Ascending aorta (tissue), 2 donors: ENCODE measurements at regions of chr13 and their contacts with region 1.

Region 1: GRCh38 chr13:43878892-43879754 is at the start of gene CCDC122:
- DNase-seq: peak; percentile 27 to 90
- H3K4me3 ChIP-seq: peak within 1 kb of the TSS; percentile 87 to 93
- H3K27ac ChIP-seq: peak within 1 kb of the TSS; percentile 93 to 96
- H3K4me1 ChIP-seq: peaks cover 0 to 9% of the 10 kb centered on the region in 2 donors
- H3K27me3 ChIP-seq: no peaks in the 10 kb centered on the region
- CTCF ChIP-seq: no peak
- total RNA-seq, gene CCDC122: 0.64 TPM

Region 2: DNA sequence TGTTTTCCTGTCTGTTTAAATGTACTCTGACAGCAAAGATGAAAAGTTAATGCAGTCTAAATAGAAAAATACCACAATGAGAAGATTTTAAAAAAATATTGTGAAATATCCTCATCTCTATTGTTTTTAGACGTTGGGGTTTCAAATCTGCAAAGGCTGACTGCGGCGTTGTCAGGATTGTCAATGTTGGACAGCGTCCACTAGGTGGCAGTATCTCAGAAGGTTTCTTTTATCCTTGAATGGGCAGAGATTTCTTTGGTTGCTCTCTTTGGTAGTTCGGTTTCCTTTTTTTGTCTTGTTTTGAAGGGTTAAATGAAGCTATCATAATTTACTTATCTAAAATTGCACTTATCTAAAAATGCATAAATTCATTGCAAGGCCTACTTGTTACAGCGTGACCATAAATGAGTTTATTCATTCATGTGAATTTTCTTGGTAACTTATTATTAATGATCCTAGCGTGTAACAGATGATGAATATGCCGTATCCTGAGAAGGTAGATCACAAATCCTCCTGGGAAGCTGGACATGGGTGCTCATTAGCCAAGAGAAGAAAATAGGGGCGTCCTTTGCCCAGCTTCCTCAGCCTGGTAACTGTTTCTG is 1284.1 kb before region 1 on chr13:
- intact Hi-C with region 1: loop called (anchors 10 kb)
- DNase-seq: no peak
- H3K4me3 ChIP-seq: no peak overlapping the region
- H3K27ac ChIP-seq: no peak overlapping the region
- H3K4me1 ChIP-seq: no peaks in the 10 kb centered on the region
- H3K27me3 ChIP-seq: no peaks in the 10 kb centered on the region
- CTCF ChIP-seq: peak; percentile 47 to 79 (median 75)

Region 3: DNA sequence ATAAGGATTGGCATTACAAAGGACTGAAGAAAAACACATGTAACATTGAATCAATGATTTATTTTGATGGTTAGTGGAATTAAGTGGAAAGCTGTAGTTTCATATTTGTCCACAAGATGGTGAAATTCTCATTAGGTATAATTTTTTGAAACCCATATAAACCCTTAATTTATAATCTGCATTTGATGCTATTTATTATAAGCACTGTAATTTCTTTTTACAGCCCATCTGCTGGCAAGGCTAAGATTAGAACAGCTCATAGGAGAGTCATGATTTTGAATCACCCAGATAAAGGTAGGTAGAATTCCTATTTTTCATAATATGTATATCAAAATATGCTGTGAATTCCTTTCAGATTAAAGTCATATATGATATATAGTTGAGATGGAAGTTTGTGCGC is 793.6 kb before region 1 on chr13:
- intact Hi-C with region 1: loop called (anchors 5 kb)
- DNase-seq: no peak
- H3K4me3 ChIP-seq: no peak overlapping the region
- H3K27ac ChIP-seq: no peak overlapping the region
- H3K4me1 ChIP-seq: no peaks in the 10 kb centered on the region
- H3K27me3 ChIP-seq: no peaks in the 10 kb centered on the region
- CTCF ChIP-seq: peak; percentile 19 to 67 (median 53)